Naive thymus-derived CD4-positive, alpha-beta T cell (primary cell): ENCODE measurements at regions of chr12 and their contacts with region 1.

Region 1: GRCh38 chr12:111599459-111600204 is 517 bp upstream of the ATXN2 start:
- DNase-seq: peak; percentile 82 to 94 (median 87)
- ATAC-seq: peak; percentile 89
- H3K4me3 ChIP-seq: peak overlapping the region; percentile 80
- H3K4me3 Mint-ChIP-seq: peak overlapping the region; percentile 74 to 93 (median 86)
- H3K27ac ChIP-seq: peak overlapping the region; percentile 80
- H3K27ac Mint-ChIP-seq: peak overlapping the region; percentile 83 to 93 (median 89)
- H3K4me1 ChIP-seq: peaks cover 3 to 5% of the 10 kb centered on the region in 2 donors
- H3K4me1 Mint-ChIP-seq: peaks cover 22 to 39% (median 26%) of the 10 kb centered on the region in 7 donors
- H3K27me3 ChIP-seq: no peaks in the 10 kb centered on the region
- H3K27me3 Mint-ChIP-seq: no peaks in the 10 kb centered on the region

Region 2: GRCh38 chr12:110501752-110502738 is 1097.6 kb before region 1 on chr12 and contains the starts of genes RAD9B and VPS29:
- CTCF ChIA-PET with region 1: no interaction called
- POLR2A ChIA-PET with region 1: no interaction called
- intact Hi-C with region 1: loop called in 1 of 2 experiments (anchors 5 kb)
- DNase-seq: peak; percentile 91 to 100 (median 99)
- ATAC-seq: peak; percentile 98
- H3K4me3 ChIP-seq: peak within 1 kb of the TSS; percentile 86
- H3K4me3 Mint-ChIP-seq: peak within 1 kb of the TSS; percentile 88 to 100 (median 97)
- H3K27ac ChIP-seq: peak within 1 kb of the TSS; percentile 89
- H3K27ac Mint-ChIP-seq: peak within 1 kb of the TSS; percentile 93 to 100 (median 97)
- H3K4me1 ChIP-seq: peaks cover 20 to 22% of the 10 kb centered on the region in 2 donors
- H3K4me1 Mint-ChIP-seq: peaks cover 22 to 52% (median 39%) of the 10 kb centered on the region in 7 donors
- H3K27me3 ChIP-seq: no peaks in the 10 kb centered on the region
- H3K27me3 Mint-ChIP-seq: peaks cover 0 to 3% (median 0%) of the 10 kb centered on the region in 5 donors
- total RNA-seq, gene RAD9B: 0.60 to 2.9 (median 1.1) TPM
- total RNA-seq, gene VPS29: 78.5 to 131 (median 115) TPM

Region 3: GRCh38 chr12:110921262-110921661 is 678.4 kb before region 1 on chr12:
- CTCF ChIA-PET with region 1: no interaction called
- POLR2A ChIA-PET with region 1: no interaction called
- intact Hi-C with region 1: no loop called
- DNase-seq: no peak
- ATAC-seq: no peak
- H3K4me3 ChIP-seq: no peak overlapping the region
- H3K4me3 Mint-ChIP-seq: no peak overlapping the region
- H3K27ac ChIP-seq: no peak overlapping the region
- H3K27ac Mint-ChIP-seq: no peak overlapping the region
- H3K4me1 ChIP-seq: no peaks in the 10 kb centered on the region
- H3K4me1 Mint-ChIP-seq: no peaks in the 10 kb centered on the region
- H3K27me3 ChIP-seq: no peaks in the 10 kb centered on the region
- H3K27me3 Mint-ChIP-seq: peaks cover 3 to 14% (median 7%) of the 10 kb centered on the region in 5 donors

Region 4: DNA sequence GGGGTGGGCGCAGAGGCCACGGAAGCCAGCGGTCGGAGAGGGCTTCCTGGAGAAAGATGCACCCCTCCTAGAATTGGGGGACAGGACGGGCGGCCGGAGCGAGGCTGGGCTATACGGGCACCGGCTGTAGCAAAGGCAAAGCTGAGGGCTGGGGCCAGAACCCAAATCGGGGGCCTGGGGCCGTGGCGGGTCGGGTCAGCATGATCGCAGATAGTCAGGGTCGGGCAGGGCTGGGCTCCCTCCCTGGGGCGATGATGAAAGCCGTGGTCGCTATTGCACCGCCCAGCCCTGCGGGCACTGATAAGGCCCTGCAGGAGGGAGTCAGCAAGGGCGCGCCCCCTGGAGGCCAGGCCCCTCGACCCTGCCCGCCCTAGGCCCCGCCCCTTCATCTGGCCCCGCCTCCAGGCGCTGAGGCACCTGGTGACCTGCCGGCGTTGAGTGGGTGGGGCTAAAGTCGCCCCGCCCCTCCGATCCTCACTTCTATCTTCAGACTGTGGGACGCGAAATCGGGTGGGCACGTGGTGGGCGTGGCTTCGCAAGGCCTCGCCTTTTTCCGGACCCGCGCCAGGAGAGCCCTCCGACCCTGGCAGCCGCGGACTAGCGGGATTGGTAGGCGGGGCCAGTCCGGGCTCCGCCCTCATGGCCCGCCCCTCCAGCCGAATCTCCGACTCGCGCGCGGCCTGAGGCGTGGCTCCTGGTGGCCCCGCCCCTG is 194.3 kb before region 1 on chr12:
- CTCF ChIA-PET with region 1: no interaction called
- POLR2A ChIA-PET with region 1: no interaction called
- intact Hi-C with region 1: loop called (anchors 1 to 2 kb)
- DNase-seq: peak; percentile 96 to 98 (median 97)
- ATAC-seq: peak; percentile 89
- H3K4me3 ChIP-seq: peak overlapping the region; percentile 68
- H3K4me3 Mint-ChIP-seq: peak overlapping the region; percentile 78 to 96 (median 90)
- H3K27ac ChIP-seq: peak overlapping the region; percentile 97
- H3K27ac Mint-ChIP-seq: peak overlapping the region; percentile 75 to 96 (median 89)
- H3K4me1 ChIP-seq: peaks cover 50 to 53% of the 10 kb centered on the region in 2 donors
- H3K4me1 Mint-ChIP-seq: peaks cover 34 to 63% (median 53%) of the 10 kb centered on the region in 7 donors
- H3K27me3 ChIP-seq: no peaks in the 10 kb centered on the region
- H3K27me3 Mint-ChIP-seq: no peaks in the 10 kb centered on the region

Region 5: GRCh38 chr12:111557271-111558106 is 42.1 kb before region 1 on chr12:
- CTCF ChIA-PET with region 1: no interaction called
- POLR2A ChIA-PET with region 1: no interaction called
- intact Hi-C with region 1: loop called in 1 of 2 experiments (anchors 5 kb)
- DNase-seq: no peak
- ATAC-seq: no peak
- H3K4me3 ChIP-seq: no peak overlapping the region
- H3K4me3 Mint-ChIP-seq: no peak overlapping the region
- H3K27ac ChIP-seq: no peak overlapping the region
- H3K27ac Mint-ChIP-seq: no peak overlapping the region
- H3K4me1 ChIP-seq: no peaks in the 10 kb centered on the region
- H3K4me1 Mint-ChIP-seq: peaks cover 8 to 40% (median 21%) of the 10 kb centered on the region in 7 donors
- H3K27me3 ChIP-seq: no peaks in the 10 kb centered on the region
- H3K27me3 Mint-ChIP-seq: no peaks in the 10 kb centered on the region

Region 6: DNA sequence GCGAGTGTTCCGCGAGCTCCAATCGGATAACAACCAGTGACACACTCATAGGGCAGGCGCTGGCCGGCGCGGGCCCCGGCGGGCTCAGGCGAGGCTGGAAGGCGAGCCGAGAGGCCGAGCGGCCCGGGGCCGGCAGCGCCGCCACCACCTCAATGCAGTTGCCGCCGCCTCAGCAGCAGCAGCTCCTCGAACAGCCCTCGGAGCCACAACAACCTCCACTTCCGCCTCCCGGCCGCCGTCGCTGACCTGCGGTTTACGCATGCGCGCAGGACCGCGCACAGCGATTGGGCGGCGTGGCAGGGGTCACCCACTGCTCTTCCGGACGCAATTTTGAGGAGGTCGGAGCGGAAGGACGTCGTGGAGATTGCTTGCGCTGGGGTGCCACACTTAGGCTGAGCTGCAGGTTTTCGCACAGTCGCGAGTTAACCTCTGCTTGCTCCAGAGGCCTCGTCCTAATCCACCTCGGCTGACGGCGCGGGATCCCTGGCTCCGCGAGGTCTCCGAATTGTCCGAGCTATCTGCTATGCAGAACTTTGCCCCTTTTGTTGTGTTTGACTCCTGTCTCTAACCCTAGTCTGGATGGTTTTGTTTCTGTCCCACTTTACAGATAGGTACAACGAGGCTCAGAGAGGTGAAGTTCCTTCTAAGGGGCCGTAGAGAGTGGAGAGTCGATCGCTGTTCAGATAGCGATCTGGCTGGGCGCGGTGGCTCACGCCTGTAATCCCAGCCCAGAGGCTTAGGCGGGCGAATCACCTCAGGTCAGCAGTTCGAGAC is 86.3 kb after region 1 on chr12 and contains the starts of genes ACAD10 and BRAP:
- CTCF ChIA-PET with region 1: no interaction called
- POLR2A ChIA-PET with region 1: interaction called, 3 read pairs
- intact Hi-C with region 1: loop called (anchors 1 to 2 kb)
- DNase-seq: peak; percentile 82 to 98 (median 93)
- ATAC-seq: peak; percentile 96
- H3K4me3 ChIP-seq: peak within 1 kb of the TSS; percentile 90
- H3K4me3 Mint-ChIP-seq: peak within 1 kb of the TSS; percentile 90 to 98 (median 96)
- H3K27ac ChIP-seq: peak within 1 kb of the TSS; percentile 83
- H3K27ac Mint-ChIP-seq: peak within 1 kb of the TSS; percentile 90 to 98 (median 96)
- H3K4me1 ChIP-seq: peaks cover 17 to 18% of the 10 kb centered on the region in 2 donors
- H3K4me1 Mint-ChIP-seq: peaks cover 23 to 54% (median 44%) of the 10 kb centered on the region in 7 donors
- H3K27me3 ChIP-seq: no peaks in the 10 kb centered on the region
- H3K27me3 Mint-ChIP-seq: peaks cover 0 to 2% (median 0%) of the 10 kb centered on the region in 5 donors
- total RNA-seq, gene ACAD10: 28.4 to 65.3 (median 36.0) TPM
- total RNA-seq, gene BRAP: 19.5 to 25.5 (median 23.0) TPM

Region 7: DNA sequence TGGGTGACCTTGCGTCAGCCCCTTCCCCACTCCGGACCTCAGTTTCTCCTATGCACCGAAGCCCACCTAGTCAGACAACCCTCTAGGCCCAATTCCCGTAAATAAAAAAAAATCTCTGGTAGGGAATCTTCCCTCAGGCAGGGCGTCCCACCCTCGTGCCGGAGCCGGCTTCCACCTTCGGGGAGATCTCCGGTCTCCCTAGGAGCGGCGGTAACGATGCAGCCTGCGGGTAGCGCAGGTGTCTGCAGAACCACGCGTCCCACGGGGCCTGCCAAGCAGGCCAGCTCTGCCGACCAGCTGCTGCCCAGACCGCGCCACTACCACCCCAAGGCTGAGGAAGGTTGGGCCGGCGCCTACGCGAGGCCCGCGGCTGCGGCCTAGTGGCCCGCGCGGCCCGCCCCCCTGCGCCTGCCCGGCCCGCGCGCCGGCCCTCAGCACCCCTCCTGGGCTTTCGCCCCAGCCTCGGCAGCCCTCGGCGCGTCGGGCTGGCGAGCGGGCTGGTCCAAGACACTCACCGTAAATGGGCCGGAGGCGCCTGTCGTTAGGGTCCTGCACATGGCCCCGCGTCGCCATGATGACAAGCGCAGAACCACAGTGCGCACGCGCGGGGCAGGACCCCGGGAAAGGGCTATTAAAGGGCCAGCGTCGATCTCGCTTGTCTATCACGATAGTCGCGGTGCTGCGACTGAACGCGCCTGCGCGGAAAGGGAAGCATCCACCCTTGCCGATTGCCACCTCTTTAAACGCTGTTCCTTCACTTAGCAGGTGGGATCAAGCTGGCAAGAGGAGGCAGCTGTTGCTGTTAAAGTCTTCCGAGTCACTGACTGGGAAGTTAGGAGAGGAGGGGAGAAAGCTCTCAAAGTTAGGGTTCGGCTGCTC is 508.8 kb after region 1 on chr12 and contains the start of gene NAA25:
- CTCF ChIA-PET with region 1: no interaction called
- POLR2A ChIA-PET with region 1: no interaction called
- intact Hi-C with region 1: loop called (anchors 2 to 10 kb)
- DNase-seq: peak; percentile 79 to 90 (median 86)
- ATAC-seq: peak; percentile 92
- H3K4me3 ChIP-seq: peak within 1 kb of the TSS; percentile 100
- H3K4me3 Mint-ChIP-seq: peak within 1 kb of the TSS; percentile 96 to 99 (median 98)
- H3K27ac ChIP-seq: peak within 1 kb of the TSS; percentile 92
- H3K27ac Mint-ChIP-seq: peak within 1 kb of the TSS; percentile 93 to 98 (median 97)
- H3K4me1 ChIP-seq: peaks cover 12 to 22% of the 10 kb centered on the region in 2 donors
- H3K4me1 Mint-ChIP-seq: peaks cover 27 to 53% (median 45%) of the 10 kb centered on the region in 7 donors
- H3K27me3 ChIP-seq: no peaks in the 10 kb centered on the region
- H3K27me3 Mint-ChIP-seq: no peaks in the 10 kb centered on the region
- total RNA-seq, gene NAA25: 39.1 to 43.0 (median 42.1) TPM

Region 8: GRCh38 chr12:112207397-112207924 is 607.8 kb after region 1 on chr12:
- CTCF ChIA-PET with region 1: no interaction called
- POLR2A ChIA-PET with region 1: no interaction called
- intact Hi-C with region 1: no loop called
- DNase-seq: no peak
- ATAC-seq: no peak
- H3K4me3 ChIP-seq: no peak overlapping the region
- H3K4me3 Mint-ChIP-seq: no peak overlapping the region
- H3K27ac ChIP-seq: no peak overlapping the region
- H3K27ac Mint-ChIP-seq: peak overlapping the region in 1 of 9 donors; percentile 42
- H3K4me1 ChIP-seq: no peaks in the 10 kb centered on the region
- H3K4me1 Mint-ChIP-seq: peaks cover 0 to 8% (median 0%) of the 10 kb centered on the region in 7 donors
- H3K27me3 ChIP-seq: no peaks in the 10 kb centered on the region
- H3K27me3 Mint-ChIP-seq: no peaks in the 10 kb centered on the region